Heart right ventricle (tissue), 16 donors: ENCODE measurements at regions of chr14 and their contacts with region 1.

Region 1: GRCh38 chr14:30443368-30444007 is 115.5 kb upstream of the G2E3 start:
- DNase-seq: no peak
- ATAC-seq: peak in 1 of 8 donors; percentile 56
- H3K4me3 ChIP-seq: no peak overlapping the region
- H3K27ac ChIP-seq: no peak overlapping the region
- H3K4me1 ChIP-seq: no peaks in the 10 kb centered on the region
- H3K27me3 ChIP-seq: peaks cover 0 to 4% (median 0%) of the 10 kb centered on the region in 7 donors
- CTCF ChIP-seq: peak in 8 of 9 donors; percentile 12 to 67 (median 51)

Region 2: DNA sequence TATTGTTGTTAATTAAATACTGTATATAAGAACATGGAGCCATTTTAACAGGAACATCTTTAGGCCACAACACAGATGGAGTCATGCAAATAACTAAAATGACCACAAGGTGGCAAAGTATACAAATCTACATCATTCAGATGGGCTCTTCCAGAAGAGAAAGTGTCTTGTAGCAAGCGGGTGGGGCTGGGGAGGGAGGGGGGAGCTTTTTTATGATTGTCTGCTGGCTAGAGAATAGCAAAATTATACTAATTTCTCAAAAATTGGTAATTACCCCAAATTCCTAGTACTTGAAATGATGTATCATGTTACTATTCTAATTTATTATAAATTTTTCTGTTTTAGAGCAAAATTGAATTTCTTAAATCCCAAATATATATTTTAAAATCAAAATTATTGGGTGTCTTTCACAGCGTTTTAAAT is 894.5 kb before region 1 on chr14:
- intact Hi-C with region 1: loop called in 1 of 10 experiments (anchors 10 kb)
- DNase-seq: peak in 1 of 2 donors; percentile 15
- ATAC-seq: peak in 7 of 8 donors; percentile 61 to 82 (median 73)
- H3K4me3 ChIP-seq: no peak overlapping the region
- H3K27ac ChIP-seq: no peak overlapping the region
- H3K4me1 ChIP-seq: peaks cover 0 to 5% (median 0%) of the 10 kb centered on the region in 9 donors
- H3K27me3 ChIP-seq: peaks cover 0 to 1% (median 0%) of the 10 kb centered on the region in 7 donors
- CTCF ChIP-seq: peak; percentile 44 to 74 (median 67)

Region 3: GRCh38 chr14:30369502-30370180 is 73.8 kb before region 1 on chr14:
- intact Hi-C with region 1: loop called in 3 of 10 experiments (anchors 5 to 10 kb)
- DNase-seq: no peak
- ATAC-seq: no peak
- H3K4me3 ChIP-seq: no peak overlapping the region
- H3K27ac ChIP-seq: no peak overlapping the region
- H3K4me1 ChIP-seq: no peaks in the 10 kb centered on the region
- H3K27me3 ChIP-seq: peaks cover 0 to 2% (median 0%) of the 10 kb centered on the region in 7 donors
- CTCF ChIP-seq: no peak

Region 4: GRCh38 chr14:30375296-30375892 is 68.1 kb before region 1 on chr14:
- intact Hi-C with region 1: loop called in 6 of 10 experiments (anchors 1 to 10 kb)
- DNase-seq: peak; percentile 30 to 42
- ATAC-seq: peak in 3 of 8 donors; percentile 40 to 74 (median 49)
- H3K4me3 ChIP-seq: no peak overlapping the region
- H3K27ac ChIP-seq: no peak overlapping the region
- H3K4me1 ChIP-seq: no peaks in the 10 kb centered on the region
- H3K27me3 ChIP-seq: peaks cover 0 to 8% (median 2%) of the 10 kb centered on the region in 7 donors
- CTCF ChIP-seq: peak; percentile 34 to 81 (median 74)

Region 5: DNA sequence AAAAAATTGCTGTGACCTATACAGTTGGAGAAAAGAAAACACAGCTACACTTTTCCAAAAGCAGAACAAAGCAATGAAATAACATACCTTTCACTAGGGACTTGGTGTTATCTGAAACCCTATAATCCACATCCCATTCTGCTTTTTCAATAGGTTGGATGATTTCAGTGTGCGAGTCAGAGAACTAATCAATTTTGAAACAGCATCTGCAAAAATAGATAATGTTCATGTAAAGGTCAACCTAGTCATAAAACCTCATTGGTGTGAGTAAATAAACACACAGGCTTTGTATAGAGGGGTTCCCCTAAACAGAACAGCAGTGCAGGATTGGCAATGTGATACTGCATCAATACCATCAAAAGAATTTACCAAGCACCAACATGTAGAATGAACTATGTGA is 57.6 kb before region 1 on chr14:
- intact Hi-C with region 1: no loop called
- DNase-seq: no peak
- ATAC-seq: no peak
- H3K4me3 ChIP-seq: no peak overlapping the region
- H3K27ac ChIP-seq: no peak overlapping the region
- H3K4me1 ChIP-seq: no peaks in the 10 kb centered on the region
- H3K27me3 ChIP-seq: peaks cover 0 to 15% (median 0%) of the 10 kb centered on the region in 7 donors
- CTCF ChIP-seq: no peak

Region 6: GRCh38 chr14:30482276-30482675 is 38.8 kb after region 1 on chr14:
- intact Hi-C with region 1: no loop called
- DNase-seq: no peak
- ATAC-seq: no peak
- H3K4me3 ChIP-seq: no peak overlapping the region
- H3K27ac ChIP-seq: no peak overlapping the region
- H3K4me1 ChIP-seq: no peaks in the 10 kb centered on the region
- H3K27me3 ChIP-seq: no peaks in the 10 kb centered on the region
- CTCF ChIP-seq: no peak